H1 (cell line): ENCODE measurements at regions of chr6 and their contacts with region 1.

Region 1: GRCh38 chr6:52263709-52264540 is 19.6 kb upstream of the IL17F start:
- DNase-seq: peak; percentile 21 to 75
- H3K4me3 ChIP-seq: no peak overlapping the region
- H3K27ac ChIP-seq: no peak overlapping the region
- H3K4me1 ChIP-seq: no peaks in the 10 kb centered on the region; a peak in 1 of 7 replicates
- H3K27me3 ChIP-seq: no peaks in the 10 kb centered on the region
- CTCF ChIP-seq: peak; percentile 82 to 94 (median 88)
- EP300 ChIP-seq: no peak
- POLR2A ChIP-seq: no peak
- RAD21 ChIP-seq: peak; percentile 88

Region 2: GRCh38 chr6:52087498-52087999 is 176.4 kb before region 1 on chr6 and contains the start of gene PKHD1:
- CTCF ChIA-PET with region 1: interaction called, 13 read pairs
- POLR2A ChIA-PET with region 1: no interaction called
- DNase-seq: no peak
- H3K4me3 ChIP-seq: no peak within 1 kb of the TSS
- H3K27ac ChIP-seq: no peak within 1 kb of the TSS
- H3K4me1 ChIP-seq: no peaks in the 10 kb centered on the region
- H3K27me3 ChIP-seq: no peaks in the 10 kb centered on the region
- CTCF ChIP-seq: peak in 2 of 3 experiments; percentile 40 to 73; a peak in 3 of 4 replicates
- EP300 ChIP-seq: no peak
- POLR2A ChIP-seq: no peak
- RAD21 ChIP-seq: peak; percentile 41 to 56
- total RNA-seq, gene PKHD1: 0.09 and 0.11 TPM in 2 replicates

Region 3: GRCh38 chr6:52162940-52163908 is 100.7 kb before region 1 on chr6:
- CTCF ChIA-PET with region 1: interaction called, 149 read pairs
- POLR2A ChIA-PET with region 1: interaction called, 8 read pairs
- DNase-seq: no peak
- H3K4me3 ChIP-seq: no peak overlapping the region
- H3K27ac ChIP-seq: no peak overlapping the region
- H3K4me1 ChIP-seq: no peaks in the 10 kb centered on the region
- H3K27me3 ChIP-seq: peaks cover 0 to 1% (median 0%) of the 10 kb centered on the region in 4 experiments; a peak in 1 of 7 replicates
- CTCF ChIP-seq: peak in 2 of 3 experiments; percentile 76 to 83; a peak in 3 of 4 replicates
- EP300 ChIP-seq: no peak
- POLR2A ChIP-seq: no peak
- RAD21 ChIP-seq: peak; percentile 97 to 98

Region 4: GRCh38 chr6:52233975-52234823 is 29.7 kb before region 1 on chr6:
- CTCF ChIA-PET with region 1: interaction called, 99 read pairs
- POLR2A ChIA-PET with region 1: interaction called, 3 read pairs
- DNase-seq: peak; percentile 25 to 58
- H3K4me3 ChIP-seq: no peak overlapping the region
- H3K27ac ChIP-seq: no peak overlapping the region
- H3K4me1 ChIP-seq: peaks cover 0 to 4% (median 0%) of the 10 kb centered on the region in 4 experiments; a peak in 1 of 7 replicates
- H3K27me3 ChIP-seq: no peaks in the 10 kb centered on the region
- CTCF ChIP-seq: peak; percentile 60 to 86 (median 82)
- EP300 ChIP-seq: no peak
- POLR2A ChIP-seq: no peak
- RAD21 ChIP-seq: peak; percentile 85 to 90

Region 5: GRCh38 chr6:52253494-52253893 is 10.4 kb before region 1 on chr6:
- CTCF ChIA-PET with region 1: interaction called, 53 read pairs
- POLR2A ChIA-PET with region 1: interaction called, 198 read pairs
- DNase-seq: no peak
- H3K4me3 ChIP-seq: no peak overlapping the region
- H3K27ac ChIP-seq: no peak overlapping the region
- H3K4me1 ChIP-seq: no peaks in the 10 kb centered on the region
- H3K27me3 ChIP-seq: no peaks in the 10 kb centered on the region
- CTCF ChIP-seq: no peak
- EP300 ChIP-seq: no peak
- POLR2A ChIP-seq: no peak
- RAD21 ChIP-seq: no peak